ENCODE measurements at regions of chr4 and their contacts with region 1.

Region 1: GRCh38 chr4:15149839-15150476 is 147.7 kb downstream of the CPEB2 start:
- DNase-seq: peak; percentile 74 to 94 (median 90)
- H3K4me3 ChIP-seq: peak overlapping the region in 5 of 59 donors; percentile 4 to 24 (median 15)
- H3K27ac ChIP-seq: peak overlapping the region; percentile 52 to 98 (median 94)
- H3K27me3 ChIP-seq: no peaks in the 10 kb centered on the region
- CTCF ChIP-seq: peak in 32 of 56 donors; percentile 8 to 51 (median 34)

Region 2: GRCh38 chr4:15043226-15043625 is 106.7 kb before region 1 on chr4:
- intact Hi-C with region 1: loop called (anchors 5 to 10 kb)
- DNase-seq: no peak
- H3K4me3 ChIP-seq: peak overlapping the region in 1 of 59 donors; percentile 6
- H3K27ac ChIP-seq: peak overlapping the region in 56 of 59 donors; percentile 3 to 89 (median 77)
- H3K27me3 ChIP-seq: no peaks in the 10 kb centered on the region
- CTCF ChIP-seq: peak in 49 of 56 donors; percentile 20 to 73 (median 50)

Measured in dorsolateral prefrontal cortex (tissue), 120 donors.